ENCODE measurements at regions of chr5 and their contacts with region 1.

Region 1: DNA sequence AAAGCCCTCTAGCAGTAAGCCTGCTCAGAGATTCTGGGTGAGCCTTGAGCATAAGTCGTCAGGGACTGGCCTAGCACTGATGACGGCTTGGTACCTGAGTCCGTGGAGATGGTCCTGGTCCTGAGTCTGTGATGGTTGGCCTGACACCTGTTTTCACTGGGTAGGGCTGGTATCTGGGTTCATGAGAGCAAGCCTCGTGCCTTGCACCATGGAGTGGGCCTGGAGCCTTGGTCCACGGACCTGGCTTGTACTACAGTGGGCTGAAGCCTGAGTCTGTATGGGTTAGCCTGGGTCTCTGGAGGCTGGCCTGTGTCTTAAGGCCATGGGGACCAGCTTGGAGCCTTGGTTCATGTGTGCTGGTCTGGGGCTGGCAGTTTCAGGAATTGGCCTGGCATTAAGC is 310.3 kb upstream of the ISL1 start:
- DNase-seq: no peak
- H3K4me3 ChIP-seq: no peak overlapping the region
- H3K27ac ChIP-seq: no peak overlapping the region
- H3K4me1 ChIP-seq: no peaks in the 10 kb centered on the region
- H3K27me3 ChIP-seq: no peaks in the 10 kb centered on the region
- CTCF ChIP-seq: no peak
- POLR2A ChIP-seq: no peak

Region 2: DNA sequence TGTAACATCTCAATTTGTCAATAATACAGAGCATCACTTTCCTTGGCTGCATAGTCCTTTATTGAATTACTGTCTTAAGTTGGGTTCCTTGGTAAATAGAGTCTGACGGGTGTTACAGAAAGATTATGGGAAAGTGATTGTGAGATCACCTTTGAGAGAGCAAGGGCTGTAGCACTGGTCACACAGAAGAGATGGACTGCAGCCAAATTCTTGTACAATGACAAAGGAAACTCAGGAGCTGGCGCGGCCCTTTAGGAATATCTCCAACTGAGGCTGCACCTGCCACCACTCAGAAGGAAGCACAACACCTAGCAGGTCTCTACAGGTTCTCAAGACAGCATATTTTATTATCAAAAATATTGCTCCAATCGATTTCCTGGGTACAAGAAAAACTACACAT is 39.7 kb before region 1 on chr5:
- intact Hi-C with region 1: no loop called
- DNase-seq: no peak
- H3K4me3 ChIP-seq: no peak overlapping the region
- H3K27ac ChIP-seq: no peak overlapping the region
- H3K4me1 ChIP-seq: no peaks in the 10 kb centered on the region
- H3K27me3 ChIP-seq: no peaks in the 10 kb centered on the region
- CTCF ChIP-seq: no peak
- POLR2A ChIP-seq: no peak

Region 3: DNA sequence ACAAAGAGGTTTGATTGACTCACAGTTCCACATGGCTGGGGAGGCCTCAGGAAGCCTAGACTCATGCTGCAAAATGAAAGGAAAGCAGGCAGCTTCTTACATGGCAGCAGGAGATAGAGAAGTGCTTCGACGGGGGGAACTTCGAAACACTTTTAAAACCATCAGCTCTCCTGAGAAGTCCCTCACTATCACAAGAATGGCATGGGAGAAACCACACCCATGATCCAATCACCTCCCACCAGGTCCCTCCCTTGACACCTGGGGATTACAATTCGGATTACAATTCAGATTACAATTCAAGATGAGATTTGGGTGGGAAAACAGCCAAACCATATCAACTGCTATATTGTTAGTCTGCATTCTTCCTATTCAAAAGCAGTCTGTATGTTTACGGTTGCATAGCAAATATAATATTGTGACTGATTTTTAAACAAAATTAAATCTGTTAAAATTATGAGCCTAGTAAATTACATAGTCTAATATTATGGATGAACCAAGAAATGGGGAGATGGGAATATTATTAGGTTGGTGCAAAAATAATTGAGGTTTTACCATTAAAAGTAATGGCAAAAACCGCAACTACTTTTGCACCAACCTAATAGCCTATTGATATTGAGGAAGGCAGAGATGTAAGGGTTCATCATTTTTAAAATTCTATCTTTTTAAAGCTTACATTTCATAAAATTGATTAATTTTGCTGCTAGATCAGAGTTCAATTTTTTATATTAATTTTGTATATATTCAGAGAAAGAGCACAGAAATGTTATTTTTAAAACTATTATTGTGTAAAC is 11.8 kb before region 1 on chr5:
- intact Hi-C with region 1: loop called (anchors 1 kb)
- DNase-seq: no peak
- H3K4me3 ChIP-seq: no peak overlapping the region
- H3K27ac ChIP-seq: no peak overlapping the region
- H3K4me1 ChIP-seq: no peaks in the 10 kb centered on the region
- H3K27me3 ChIP-seq: no peaks in the 10 kb centered on the region
- CTCF ChIP-seq: no peak
- POLR2A ChIP-seq: no peak

Region 4: DNA sequence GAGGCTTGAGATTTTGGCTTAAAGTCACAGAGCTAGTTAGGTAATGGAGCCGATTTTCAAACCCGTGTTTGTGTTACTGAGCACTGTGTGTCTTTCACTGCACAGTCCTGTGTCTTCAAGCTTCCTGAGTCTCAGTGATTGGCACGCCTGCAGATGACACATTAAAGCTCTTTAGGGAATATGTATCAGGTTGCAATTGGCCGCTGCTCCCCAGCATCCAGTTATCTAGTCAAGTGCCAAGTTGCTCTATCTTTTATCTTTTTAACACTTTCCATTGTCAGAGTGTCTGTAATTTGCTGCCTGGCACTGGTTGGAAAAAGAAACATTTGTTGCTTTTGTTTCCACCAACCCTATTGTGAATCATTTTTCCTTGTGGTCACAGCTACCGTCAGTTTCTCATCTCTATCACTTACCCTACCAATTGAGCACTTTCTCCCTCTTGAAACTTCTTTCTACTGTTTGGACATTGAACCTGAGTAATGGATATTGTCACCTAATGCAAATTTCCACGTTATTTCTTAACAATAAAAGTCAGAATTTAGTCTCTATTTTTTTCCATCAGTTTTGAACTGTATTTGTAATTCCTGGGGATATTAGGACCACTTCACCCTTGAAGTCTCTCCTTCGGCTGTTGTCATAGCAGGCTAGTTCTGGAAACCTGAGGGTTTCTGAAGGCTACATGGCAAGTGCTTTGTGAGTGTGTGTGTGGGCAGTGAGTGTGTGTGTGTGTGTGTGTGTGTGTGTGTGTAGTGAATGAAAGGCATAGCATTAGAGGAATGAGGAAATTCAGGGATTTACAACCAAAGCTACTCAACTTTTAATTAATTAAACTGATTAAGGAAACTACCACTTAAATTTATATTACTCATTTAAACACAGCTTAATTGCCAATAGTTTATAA is 584.7 kb after region 1 on chr5:
- intact Hi-C with region 1: loop called (anchors 5 kb)
- DNase-seq: no peak
- H3K4me3 ChIP-seq: no peak overlapping the region
- H3K27ac ChIP-seq: no peak overlapping the region
- H3K4me1 ChIP-seq: no peaks in the 10 kb centered on the region
- H3K27me3 ChIP-seq: no peaks in the 10 kb centered on the region
- CTCF ChIP-seq: no peak
- POLR2A ChIP-seq: no peak

Region 5: GRCh38 chr5:52560366-52560765 is 1487.4 kb after region 1 on chr5:
- intact Hi-C with region 1: loop called (anchors 5 kb)
- DNase-seq: no peak
- H3K4me3 ChIP-seq: no peak overlapping the region
- H3K27ac ChIP-seq: no peak overlapping the region
- H3K4me1 ChIP-seq: no peaks in the 10 kb centered on the region
- H3K27me3 ChIP-seq: peaks cover 0 to 5% of the 10 kb centered on the region in 2 donors
- CTCF ChIP-seq: no peak
- POLR2A ChIP-seq: no peak

Measured in breast epithelium (tissue), 4 donors.